Activated B cell treated with CpG ODN at 0.5 μM for 24 hours (primary cell): ENCODE measurements at regions of chr6 and their contacts with region 1.

Region 1: GRCh38 chr6:138403801-138404661 is at the start of gene HEBP2:
- DNase-seq: peak; percentile 88
- ATAC-seq: peak; percentile 87
- H3K4me3 Mint-ChIP-seq: peak within 1 kb of the TSS; percentile 90
- H3K27ac Mint-ChIP-seq: peak within 1 kb of the TSS; percentile 89
- H3K4me1 Mint-ChIP-seq: peaks cover 20% of the 10 kb centered on the region
- H3K27me3 Mint-ChIP-seq: no peaks in the 10 kb centered on the region
- CTCF ChIP-seq: no peak
- total RNA-seq, gene HEBP2: 26.2 and 32.7 TPM in 2 replicates

Region 2: GRCh38 chr6:137443901-137444300 is 960.1 kb before region 1 on chr6:
- CTCF ChIA-PET with region 1: no interaction called
- POLR2A ChIA-PET with region 1: no interaction called
- intact Hi-C with region 1: no loop called
- DNase-seq: no peak
- ATAC-seq: no peak
- H3K4me3 Mint-ChIP-seq: no peak overlapping the region
- H3K27ac Mint-ChIP-seq: no peak overlapping the region
- H3K4me1 Mint-ChIP-seq: no peaks in the 10 kb centered on the region
- H3K27me3 Mint-ChIP-seq: peaks cover 2% of the 10 kb centered on the region
- CTCF ChIP-seq: no peak

Region 3: GRCh38 chr6:138001750-138002349 is 402.2 kb before region 1 on chr6:
- CTCF ChIA-PET with region 1: no interaction called
- POLR2A ChIA-PET with region 1: no interaction called
- intact Hi-C with region 1: loop called (anchors 10 kb)
- DNase-seq: no peak
- ATAC-seq: peak; percentile 57
- H3K4me3 Mint-ChIP-seq: no peak overlapping the region
- H3K27ac Mint-ChIP-seq: no peak overlapping the region
- H3K4me1 Mint-ChIP-seq: peaks cover 3% of the 10 kb centered on the region
- H3K27me3 Mint-ChIP-seq: peaks cover 5% of the 10 kb centered on the region
- CTCF ChIP-seq: peak; percentile 98

Region 4: GRCh38 chr6:138161338-138162110 is 242.5 kb before region 1 on chr6 and contains the start of gene ARFGEF3:
- CTCF ChIA-PET with region 1: no interaction called
- POLR2A ChIA-PET with region 1: interaction called, 3 read pairs
- intact Hi-C with region 1: loop called (anchors 1 kb)
- DNase-seq: peak; percentile 41
- ATAC-seq: peak; percentile 94
- H3K4me3 Mint-ChIP-seq: peak within 1 kb of the TSS; percentile 74
- H3K27ac Mint-ChIP-seq: no peak within 1 kb of the TSS
- H3K4me1 Mint-ChIP-seq: peaks cover 15% of the 10 kb centered on the region
- H3K27me3 Mint-ChIP-seq: peaks cover 43% of the 10 kb centered on the region
- CTCF ChIP-seq: no peak
- total RNA-seq, gene ARFGEF3: 0.02 TPM in 2 replicates

Region 5: GRCh38 chr6:138455746-138456400 is 51.8 kb after region 1 on chr6:
- CTCF ChIA-PET with region 1: no interaction called
- POLR2A ChIA-PET with region 1: no interaction called
- intact Hi-C with region 1: loop called (anchors 1 kb)
- DNase-seq: no peak
- ATAC-seq: peak; percentile 89
- H3K4me3 Mint-ChIP-seq: peak overlapping the region; percentile 57
- H3K27ac Mint-ChIP-seq: peak overlapping the region; percentile 56
- H3K4me1 Mint-ChIP-seq: peaks cover 23% of the 10 kb centered on the region
- H3K27me3 Mint-ChIP-seq: no peaks in the 10 kb centered on the region
- CTCF ChIP-seq: no peak

Region 6: DNA sequence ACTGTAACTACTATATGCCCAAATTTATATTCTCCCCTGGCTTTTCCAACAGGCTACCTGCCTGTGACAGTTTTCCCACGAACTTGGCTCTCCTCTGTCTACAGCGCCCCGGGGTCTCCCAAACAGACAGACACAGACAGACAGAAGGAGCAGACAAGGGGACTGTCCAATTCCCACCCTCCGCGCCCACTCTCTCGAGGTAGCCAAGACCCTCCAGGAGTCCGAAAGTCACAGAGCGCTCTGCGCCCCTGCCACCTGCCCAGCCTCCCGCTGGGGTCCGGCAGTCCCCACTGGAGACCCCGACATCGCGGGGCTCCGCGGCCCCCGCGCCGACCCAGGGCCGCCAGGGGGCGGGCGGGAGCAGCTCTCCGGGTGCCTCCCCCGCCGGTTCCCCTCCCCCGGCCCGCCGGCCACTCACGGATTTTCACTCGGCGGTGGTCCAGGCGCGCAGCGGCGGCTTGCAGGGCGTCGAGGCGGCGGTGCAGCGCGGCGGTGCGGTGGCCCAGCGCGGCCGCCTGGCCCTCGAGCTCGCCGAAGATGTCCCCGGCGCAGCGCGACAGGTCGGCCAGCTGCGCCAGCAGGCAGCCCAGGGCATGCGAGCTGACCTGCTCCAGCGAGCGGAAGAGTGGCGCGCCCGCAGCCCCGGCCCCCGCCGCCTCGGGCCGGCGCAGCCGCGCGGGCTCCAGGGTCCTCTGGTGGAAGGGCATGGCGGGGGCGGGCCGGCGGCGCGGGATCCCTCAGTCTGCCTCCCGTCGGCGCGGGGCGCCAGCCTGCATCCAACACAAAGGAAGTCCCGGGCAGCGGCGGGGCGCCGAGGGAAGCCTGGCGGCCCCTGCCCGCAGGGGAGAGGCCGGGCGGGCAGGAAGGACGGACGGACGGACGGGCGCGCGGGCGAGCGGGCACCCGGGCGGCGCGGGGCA is 288.3 kb after region 1 on chr6:
- CTCF ChIA-PET with region 1: no interaction called
- POLR2A ChIA-PET with region 1: no interaction called
- intact Hi-C with region 1: loop called (anchors 10 kb)
- DNase-seq: peak; percentile 75
- ATAC-seq: peak; percentile 79
- H3K4me3 Mint-ChIP-seq: peak overlapping the region; percentile 87
- H3K27ac Mint-ChIP-seq: no peak overlapping the region
- H3K4me1 Mint-ChIP-seq: peaks cover 11% of the 10 kb centered on the region
- H3K27me3 Mint-ChIP-seq: peaks cover 31% of the 10 kb centered on the region
- CTCF ChIP-seq: peak; percentile 63